ENCODE measurements at regions of chr3 and their contacts with region 1.

Region 1: GRCh38 chr3:15268033-15268631 is 62.1 kb downstream of the CAPN7 start:
- DNase-seq: peak; percentile 87 to 95 (median 93)
- H3K4me3 ChIP-seq: no peak overlapping the region
- H3K27ac ChIP-seq: no peak overlapping the region
- H3K4me1 ChIP-seq: peaks cover 13 to 62% (median 46%) of the 10 kb centered on the region in 4 experiments
- H3K27me3 ChIP-seq: no peaks in the 10 kb centered on the region

Region 2: DNA sequence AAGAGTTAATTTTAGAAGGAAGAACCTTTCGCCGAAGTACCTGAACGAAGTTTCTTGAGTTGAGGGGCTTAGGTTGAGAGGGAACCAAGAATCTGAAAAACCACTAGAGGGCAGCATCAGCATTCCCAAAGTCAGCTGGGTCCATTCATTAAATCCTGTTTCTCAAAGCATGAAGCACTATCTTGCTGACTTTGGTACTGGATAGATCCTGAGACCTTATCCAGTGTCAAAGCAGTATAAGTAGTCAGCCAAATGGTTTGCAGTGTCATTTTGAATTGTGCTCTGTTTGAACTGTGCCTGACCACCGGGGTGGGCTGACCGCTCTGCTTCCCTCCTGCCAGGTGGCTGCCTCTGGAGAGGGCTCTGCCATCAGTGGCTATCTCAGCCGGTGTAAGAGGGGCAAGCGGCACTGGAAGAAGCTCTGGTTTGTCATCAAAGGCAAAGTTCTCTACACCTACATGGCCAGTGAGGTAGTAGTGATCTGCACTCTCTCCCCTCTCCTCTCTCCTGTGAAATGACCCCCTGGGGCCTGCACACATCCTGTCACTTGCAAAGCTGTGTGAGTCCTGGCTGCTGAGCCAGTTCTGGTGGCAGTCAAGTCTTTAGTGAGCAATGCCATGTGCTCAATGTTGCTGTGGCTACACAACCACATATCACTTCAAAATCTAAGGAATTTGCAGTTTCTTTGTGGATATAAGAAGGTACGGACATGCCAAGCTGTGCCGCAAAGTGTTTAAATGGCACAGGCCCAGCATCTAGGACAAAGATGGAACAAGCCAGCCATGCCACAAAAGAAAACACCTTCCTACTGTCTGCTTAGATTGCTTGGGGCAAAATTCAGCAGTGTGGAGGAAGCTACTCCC is 342.2 kb before region 1 on chr3:
- CTCF ChIA-PET with region 1: no interaction called
- POLR2A ChIA-PET with region 1: no interaction called
- DNase-seq: peak; percentile 51 to 71 (median 60)
- H3K4me3 ChIP-seq: no peak overlapping the region
- H3K27ac ChIP-seq: no peak overlapping the region
- H3K4me1 ChIP-seq: peaks cover 0 to 7% (median under 1%) of the 10 kb centered on the region in 4 experiments
- H3K27me3 ChIP-seq: no peaks in the 10 kb centered on the region

Region 3: DNA sequence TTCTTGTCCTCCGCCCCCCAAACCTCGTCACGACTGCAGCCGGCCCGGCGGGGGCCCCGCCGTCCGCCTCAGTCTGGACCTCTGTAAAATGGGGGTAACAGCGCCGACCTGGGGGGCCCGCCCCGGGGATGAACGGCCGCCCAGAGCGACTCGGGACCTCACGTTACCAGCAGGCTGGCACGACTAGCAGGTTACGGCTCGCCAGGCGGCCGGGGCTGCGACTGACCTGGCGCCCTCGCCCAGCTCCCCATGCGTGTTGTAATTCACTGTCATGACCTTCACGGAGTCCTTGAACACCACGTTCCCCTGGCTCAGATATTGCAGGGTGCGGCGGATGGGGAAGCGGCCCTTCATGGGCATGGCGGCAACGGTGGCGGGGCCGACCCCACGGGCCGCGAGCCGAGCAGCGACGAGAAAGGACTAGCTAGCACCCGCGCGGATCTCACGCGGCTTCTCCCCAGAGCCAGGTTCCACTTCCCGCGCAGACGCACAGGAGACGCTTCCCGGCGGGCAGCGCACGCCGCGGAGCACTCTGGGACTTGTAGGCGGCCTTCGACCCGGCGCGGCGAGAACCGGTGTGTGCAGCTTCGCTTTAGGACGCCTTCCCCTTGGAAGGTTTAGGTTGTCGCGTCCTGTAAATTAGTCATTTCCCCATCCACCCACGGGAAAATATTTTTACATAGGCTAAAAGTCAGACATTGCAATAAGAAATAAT is 203.1 kb before region 1 on chr3 and contains the start of gene MRPS25:
- CTCF ChIA-PET with region 1: no interaction called
- POLR2A ChIA-PET with region 1: no interaction called
- DNase-seq: peak; percentile 88 to 95 (median 94)
- H3K4me3 ChIP-seq: peak within 1 kb of the TSS; percentile 81 to 95 (median 84)
- H3K27ac ChIP-seq: peak within 1 kb of the TSS; percentile 54 to 85
- H3K4me1 ChIP-seq: peaks cover 0 to 21% (median 16%) of the 10 kb centered on the region in 4 experiments
- H3K27me3 ChIP-seq: no peaks in the 10 kb centered on the region

Region 4: DNA sequence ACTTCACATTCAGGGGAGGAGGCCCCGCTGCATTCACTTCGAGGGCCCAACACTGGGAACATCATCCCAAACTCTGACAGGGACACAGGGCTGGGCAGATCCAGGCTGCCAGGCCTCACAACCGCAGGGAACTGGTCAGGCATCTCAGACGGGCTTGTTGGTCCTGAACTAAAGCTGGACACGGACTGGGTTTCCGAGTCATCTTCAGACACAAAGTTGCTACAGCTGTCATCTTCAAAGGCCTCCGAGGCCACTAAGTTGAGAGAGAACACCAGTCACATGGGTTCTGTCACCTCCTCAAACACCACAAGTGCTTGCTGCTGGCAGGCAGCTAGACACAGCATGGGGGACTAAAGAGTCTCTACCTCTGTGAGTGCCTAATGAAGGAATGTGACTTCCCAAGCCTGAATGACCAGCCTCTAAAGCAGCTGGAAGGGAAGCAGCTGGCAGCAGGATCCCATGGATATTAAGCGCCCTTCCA is 11.2 kb before region 1 on chr3:
- CTCF ChIA-PET with region 1: interaction called, 12 read pairs
- POLR2A ChIA-PET with region 1: no interaction called
- DNase-seq: no peak
- H3K4me3 ChIP-seq: no peak overlapping the region
- H3K27ac ChIP-seq: no peak overlapping the region
- H3K4me1 ChIP-seq: no peaks in the 10 kb centered on the region
- H3K27me3 ChIP-seq: no peaks in the 10 kb centered on the region

Region 5: GRCh38 chr3:15332405-15333098 is 64.4 kb after region 1 on chr3 and contains the start of gene SH3BP5:
- CTCF ChIA-PET with region 1: interaction called, 146 read pairs
- POLR2A ChIA-PET with region 1: interaction called, 8 read pairs
- DNase-seq: peak; percentile 50 to 74 (median 70)
- H3K4me3 ChIP-seq: peak within 1 kb of the TSS; percentile 42 to 93 (median 77)
- H3K27ac ChIP-seq: no peak within 1 kb of the TSS
- H3K4me1 ChIP-seq: peaks cover 16 to 60% (median 39%) of the 10 kb centered on the region in 4 experiments
- H3K27me3 ChIP-seq: peaks cover 0 to 11% (median 0%) of the 10 kb centered on the region in 5 experiments

Region 6: DNA sequence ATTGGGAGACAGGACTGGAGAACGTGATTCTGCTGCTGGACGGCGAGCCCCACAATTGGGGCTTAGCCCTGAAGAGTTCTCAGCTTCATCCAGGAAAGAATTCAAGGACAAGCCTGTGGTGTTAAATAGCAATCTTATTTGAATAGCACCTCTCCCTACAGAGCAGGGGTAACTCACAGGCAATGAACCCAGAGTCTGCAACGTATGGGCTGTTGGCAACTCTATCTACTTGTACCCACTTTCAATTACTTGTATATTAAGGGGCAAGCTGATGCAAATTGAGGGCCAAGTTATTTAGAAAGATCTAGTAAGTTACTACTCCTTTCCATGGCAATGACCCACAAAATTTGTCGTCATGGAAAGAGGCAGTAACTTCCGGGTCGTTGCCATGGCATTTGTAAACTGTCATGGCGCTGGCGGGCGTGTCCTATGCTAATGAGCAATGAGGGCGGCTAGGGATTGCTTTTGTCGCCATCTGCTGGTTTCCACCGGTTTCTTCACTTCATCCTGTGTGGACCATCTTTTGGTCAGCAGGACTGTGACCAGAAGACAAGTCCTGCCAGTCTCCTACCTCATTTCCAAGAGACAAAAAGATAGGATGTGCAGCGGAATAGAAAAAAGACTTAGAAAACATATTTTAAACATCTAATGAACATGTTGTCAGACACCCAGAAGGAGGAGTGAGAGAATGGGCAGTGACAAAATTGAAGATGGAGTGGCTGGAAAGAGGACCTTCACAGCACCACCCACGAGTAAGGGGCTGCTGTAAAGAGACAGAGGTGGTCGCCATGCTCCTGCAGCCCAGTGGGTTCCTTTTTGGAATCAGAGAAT is 110.0 kb after region 1 on chr3:
- CTCF ChIA-PET with region 1: interaction called, 135 read pairs
- POLR2A ChIA-PET with region 1: interaction called, 3 read pairs
- DNase-seq: peak; percentile 95 to 97 (median 96)
- H3K4me3 ChIP-seq: peak overlapping the region in 1 of 7 experiments; percentile 34
- H3K27ac ChIP-seq: peak overlapping the region in 1 of 2 experiments; percentile 75
- H3K4me1 ChIP-seq: peaks cover 0 to 7% (median 2%) of the 10 kb centered on the region in 4 experiments
- H3K27me3 ChIP-seq: no peaks in the 10 kb centered on the region

Region 7: GRCh38 chr3:15399970-15400369 is 131.8 kb after region 1 on chr3:
- CTCF ChIA-PET with region 1: interaction called, 47 read pairs
- POLR2A ChIA-PET with region 1: no interaction called
- DNase-seq: no peak
- H3K4me3 ChIP-seq: no peak overlapping the region
- H3K27ac ChIP-seq: no peak overlapping the region
- H3K4me1 ChIP-seq: no peaks in the 10 kb centered on the region
- H3K27me3 ChIP-seq: no peaks in the 10 kb centered on the region